Endothelial cell of umbilical vein (primary cell): ENCODE measurements at regions of chr2 and their contacts with region 1.

Region 1: GRCh38 chr2:207529330-207530159 is at the start of gene CREB1:
- DNase-seq: peak; percentile 99
- H3K4me3 ChIP-seq: peak within 1 kb of the TSS; percentile 79 to 98 (median 91)
- H3K27ac ChIP-seq: peak within 1 kb of the TSS; percentile 95
- H3K4me1 ChIP-seq: peaks cover 28% of the 10 kb centered on the region
- H3K27me3 ChIP-seq: no peaks in the 10 kb centered on the region
- CTCF ChIP-seq: no peak
- POLR2A ChIP-seq: no peak
- total RNA-seq, gene CREB1: 69.3 and 71.1 TPM in 2 replicates

Region 2: DNA sequence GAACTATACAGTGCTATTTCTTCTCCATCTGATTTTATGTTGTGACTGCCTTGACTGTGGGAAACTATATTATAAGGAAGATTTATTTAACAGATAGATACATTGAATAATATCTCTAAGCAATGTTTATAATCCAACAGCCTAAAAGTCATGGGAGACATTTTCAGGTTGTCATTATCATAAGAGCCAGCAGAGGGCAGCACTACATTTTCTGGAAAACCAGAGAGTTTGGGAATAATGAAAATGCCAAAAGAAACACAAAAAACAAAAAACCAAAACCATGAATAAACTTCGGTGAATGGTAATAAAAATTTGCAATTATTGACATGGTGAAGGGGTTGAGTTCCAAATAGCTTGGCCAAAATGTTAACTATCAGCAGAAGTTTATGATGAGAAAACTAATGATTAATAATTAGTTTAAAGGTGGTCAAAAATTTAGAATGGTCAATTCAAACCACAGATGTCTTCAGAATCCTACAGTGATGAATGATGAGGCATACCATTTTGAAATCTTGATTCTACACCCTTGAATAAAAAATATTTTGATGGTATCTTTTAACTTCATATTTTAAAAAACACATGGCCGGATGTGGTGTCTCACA is 1365.2 kb before region 1 on chr2:
- CTCF ChIA-PET with region 1: no interaction called
- POLR2A ChIA-PET with region 1: no interaction called
- dilution Hi-C with region 1: no loop called
- intact Hi-C with region 1: no loop called
- DNase-seq: peak; percentile 50
- H3K4me3 ChIP-seq: no peak overlapping the region
- H3K27ac ChIP-seq: no peak overlapping the region
- H3K4me1 ChIP-seq: peaks cover 18% of the 10 kb centered on the region
- H3K27me3 ChIP-seq: no peaks in the 10 kb centered on the region
- CTCF ChIP-seq: peak; percentile 38 to 53
- POLR2A ChIP-seq: no peak

Region 3: DNA sequence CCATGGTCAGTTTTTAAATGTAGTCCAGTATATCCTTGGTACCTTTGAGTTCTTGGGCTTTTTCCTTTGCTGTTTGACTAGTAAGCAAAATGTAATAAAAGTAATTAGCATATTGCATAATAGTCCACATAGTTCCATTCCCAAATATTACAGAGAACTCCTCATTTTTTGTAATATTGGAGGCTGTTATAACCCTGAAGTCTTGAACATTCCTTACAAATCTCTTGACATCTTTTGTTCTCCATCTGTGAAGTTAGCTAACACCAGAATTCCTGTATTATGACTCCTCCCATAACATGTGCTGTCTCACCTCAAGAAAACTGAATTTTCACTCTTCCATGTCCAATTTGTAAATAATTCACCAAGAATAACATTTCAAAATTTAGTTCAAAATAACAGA is 17.3 kb after region 1 on chr2:
- CTCF ChIA-PET with region 1: interaction called, 9 read pairs
- POLR2A ChIA-PET with region 1: interaction called, 6 read pairs
- dilution Hi-C with region 1: no loop called
- intact Hi-C with region 1: loop called (anchors 1 kb)
- DNase-seq: no peak
- H3K4me3 ChIP-seq: no peak overlapping the region
- H3K27ac ChIP-seq: no peak overlapping the region
- H3K4me1 ChIP-seq: peaks cover 13% of the 10 kb centered on the region
- H3K27me3 ChIP-seq: no peaks in the 10 kb centered on the region
- CTCF ChIP-seq: no peak
- POLR2A ChIP-seq: no peak

Region 4: GRCh38 chr2:207561386-207562080 is 32.0 kb after region 1 on chr2:
- CTCF ChIA-PET with region 1: interaction called, 3 read pairs
- POLR2A ChIA-PET with region 1: no interaction called
- dilution Hi-C with region 1: no loop called
- intact Hi-C with region 1: loop called (anchors 1 kb)
- DNase-seq: peak; percentile 70
- H3K4me3 ChIP-seq: no peak overlapping the region
- H3K27ac ChIP-seq: peak overlapping the region; percentile 51
- H3K4me1 ChIP-seq: peaks cover 19% of the 10 kb centered on the region
- H3K27me3 ChIP-seq: no peaks in the 10 kb centered on the region
- CTCF ChIP-seq: no peak
- POLR2A ChIP-seq: no peak

Region 5: GRCh38 chr2:207617011-207617691 is 87.6 kb after region 1 on chr2:
- CTCF ChIA-PET with region 1: interaction called, 5 read pairs
- POLR2A ChIA-PET with region 1: interaction called, 10 read pairs
- dilution Hi-C with region 1: no loop called
- intact Hi-C with region 1: loop called (anchors 1 kb)
- DNase-seq: peak; percentile 92
- H3K4me3 ChIP-seq: peak overlapping the region in 1 of 3 experiments; percentile 2
- H3K27ac ChIP-seq: peak overlapping the region; percentile 73
- H3K4me1 ChIP-seq: peaks cover 18% of the 10 kb centered on the region
- H3K27me3 ChIP-seq: no peaks in the 10 kb centered on the region
- CTCF ChIP-seq: no peak
- POLR2A ChIP-seq: no peak

Region 6: GRCh38 chr2:207676827-207677354 is 147.3 kb after region 1 on chr2:
- CTCF ChIA-PET with region 1: no interaction called
- POLR2A ChIA-PET with region 1: no interaction called
- dilution Hi-C with region 1: no loop called
- intact Hi-C with region 1: loop called (anchors 1 kb)
- DNase-seq: peak; percentile 89
- H3K4me3 ChIP-seq: peak overlapping the region; percentile 16 to 70 (median 29)
- H3K27ac ChIP-seq: peak overlapping the region; percentile 94
- H3K4me1 ChIP-seq: peaks cover 17% of the 10 kb centered on the region
- H3K27me3 ChIP-seq: no peaks in the 10 kb centered on the region
- CTCF ChIP-seq: no peak
- POLR2A ChIP-seq: peak; percentile 24

Region 7: DNA sequence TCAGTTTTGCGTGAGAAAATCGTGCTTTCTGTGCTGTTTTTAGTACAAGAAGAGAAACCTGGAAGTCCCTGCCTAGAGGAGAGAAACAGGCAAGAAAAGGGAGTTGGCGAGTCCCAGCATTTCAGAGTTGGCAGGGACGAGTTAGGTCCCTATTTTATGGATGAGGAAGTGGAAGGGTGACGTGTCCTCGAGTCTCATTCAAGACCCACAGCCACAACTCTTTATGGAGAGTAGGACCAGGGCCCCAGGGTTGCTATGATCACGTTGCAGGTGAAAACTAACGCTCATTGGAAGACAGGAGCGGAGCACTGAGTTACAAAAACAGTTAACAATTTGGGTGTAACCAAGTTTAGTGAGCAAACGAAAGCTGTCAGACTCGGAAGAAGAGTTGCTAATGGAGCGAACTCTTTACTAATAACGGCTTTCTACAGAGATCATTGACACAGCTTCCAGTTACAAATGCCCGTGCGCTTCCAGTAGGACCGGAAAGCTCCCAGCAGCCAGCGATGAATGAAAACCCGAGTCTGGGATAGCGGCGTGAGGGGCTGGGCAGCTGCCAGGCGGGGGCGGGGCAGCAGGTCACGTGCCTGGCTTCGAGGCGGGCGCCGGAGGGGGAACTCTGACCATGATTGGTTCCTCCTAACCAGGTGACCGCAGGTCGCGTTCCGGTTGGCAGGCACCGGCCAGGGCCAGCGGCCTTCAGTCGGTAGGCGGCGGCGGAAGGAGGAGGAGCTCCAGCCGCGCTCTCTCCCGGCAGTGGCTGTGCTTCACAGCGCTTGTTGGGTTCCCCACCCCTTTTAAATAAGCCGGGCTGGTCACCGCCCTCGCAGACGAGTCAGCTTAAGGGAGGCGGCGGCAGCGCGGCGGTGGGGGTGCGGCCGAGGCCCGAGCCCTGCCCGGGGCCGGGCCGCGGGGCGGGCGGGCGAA is 181.5 kb after region 1 on chr2 and contains the start of gene CCNYL1:
- CTCF ChIA-PET with region 1: no interaction called
- POLR2A ChIA-PET with region 1: interaction called, 9 read pairs
- dilution Hi-C with region 1: no loop called
- intact Hi-C with region 1: loop called (anchors 1 kb)
- DNase-seq: peak; percentile 100
- H3K4me3 ChIP-seq: peak within 1 kb of the TSS; percentile 78 to 88 (median 78)
- H3K27ac ChIP-seq: peak within 1 kb of the TSS; percentile 86
- H3K4me1 ChIP-seq: peaks cover 21% of the 10 kb centered on the region
- H3K27me3 ChIP-seq: no peaks in the 10 kb centered on the region
- CTCF ChIP-seq: peak in 1 of 2 donors; percentile 3
- POLR2A ChIP-seq: peak; percentile 69
- total RNA-seq, gene CCNYL1: 47.3 and 49.3 TPM in 2 replicates

Region 8: GRCh38 chr2:207725873-207726578 is 196.5 kb after region 1 on chr2:
- CTCF ChIA-PET with region 1: no interaction called
- POLR2A ChIA-PET with region 1: no interaction called
- dilution Hi-C with region 1: no loop called
- intact Hi-C with region 1: loop called (anchors 5 kb)
- DNase-seq: peak; percentile 62
- H3K4me3 ChIP-seq: no peak overlapping the region
- H3K27ac ChIP-seq: no peak overlapping the region
- H3K4me1 ChIP-seq: peaks cover 20% of the 10 kb centered on the region
- H3K27me3 ChIP-seq: no peaks in the 10 kb centered on the region
- CTCF ChIP-seq: no peak
- POLR2A ChIP-seq: no peak